ENCODE measurements at regions of chr12 and their contacts with region 1.

Region 1: GRCh38 chr12:6904280-6905278 is at the start of gene LRRC23:
- DNase-seq: peak; percentile 98
- total RNA-seq, gene LRRC23: 13.3 TPM

Region 2: GRCh38 chr12:6662906-6663742 is 241.5 kb before region 1 on chr12 and contains the start of gene ING4:
- intact Hi-C with region 1: no loop called
- DNase-seq: peak; percentile 99
- total RNA-seq, gene ING4: 20.6 TPM

Region 3: DNA sequence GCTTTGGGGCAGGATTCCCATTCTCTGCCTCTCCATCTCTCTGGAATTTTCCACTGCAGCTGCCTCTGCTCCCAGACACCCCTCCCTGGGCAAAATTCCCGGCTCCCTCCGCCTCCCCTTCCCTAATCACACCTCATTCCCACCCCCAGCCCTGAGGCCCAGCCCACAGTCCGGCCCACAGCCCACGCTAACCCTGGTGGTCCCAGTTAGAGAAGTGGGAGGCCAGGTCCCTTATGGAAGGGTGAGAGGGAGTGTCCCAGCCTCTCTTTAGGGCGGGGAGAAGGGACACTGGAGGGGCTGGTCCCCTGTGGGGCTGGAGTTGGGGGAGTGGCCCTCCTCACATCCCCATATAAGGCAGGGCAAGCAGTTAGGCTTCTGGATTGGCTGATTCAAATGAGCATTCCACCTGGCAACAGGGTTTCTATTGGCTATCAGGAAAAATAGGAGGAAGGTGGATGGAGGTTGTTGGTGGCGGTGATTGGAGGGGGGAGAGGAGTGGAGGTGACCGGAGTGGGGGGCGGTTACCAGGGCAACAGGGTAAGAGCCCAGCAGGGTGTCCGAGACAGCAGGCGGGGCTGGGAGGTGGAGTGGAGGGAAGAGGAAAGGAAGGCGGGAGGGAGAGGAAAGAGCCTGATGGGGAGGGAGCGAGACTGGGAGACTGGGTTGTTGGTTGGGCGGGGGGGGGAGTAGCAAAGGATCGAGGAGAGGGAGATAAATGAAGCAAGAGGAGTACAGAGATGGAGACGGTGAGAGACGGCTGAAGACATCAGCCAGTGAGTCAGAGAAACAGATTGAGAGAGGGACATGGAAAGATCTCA is 140.4 kb before region 1 on chr12:
- intact Hi-C with region 1: no loop called
- DNase-seq: peak; percentile 96

Region 4: DNA sequence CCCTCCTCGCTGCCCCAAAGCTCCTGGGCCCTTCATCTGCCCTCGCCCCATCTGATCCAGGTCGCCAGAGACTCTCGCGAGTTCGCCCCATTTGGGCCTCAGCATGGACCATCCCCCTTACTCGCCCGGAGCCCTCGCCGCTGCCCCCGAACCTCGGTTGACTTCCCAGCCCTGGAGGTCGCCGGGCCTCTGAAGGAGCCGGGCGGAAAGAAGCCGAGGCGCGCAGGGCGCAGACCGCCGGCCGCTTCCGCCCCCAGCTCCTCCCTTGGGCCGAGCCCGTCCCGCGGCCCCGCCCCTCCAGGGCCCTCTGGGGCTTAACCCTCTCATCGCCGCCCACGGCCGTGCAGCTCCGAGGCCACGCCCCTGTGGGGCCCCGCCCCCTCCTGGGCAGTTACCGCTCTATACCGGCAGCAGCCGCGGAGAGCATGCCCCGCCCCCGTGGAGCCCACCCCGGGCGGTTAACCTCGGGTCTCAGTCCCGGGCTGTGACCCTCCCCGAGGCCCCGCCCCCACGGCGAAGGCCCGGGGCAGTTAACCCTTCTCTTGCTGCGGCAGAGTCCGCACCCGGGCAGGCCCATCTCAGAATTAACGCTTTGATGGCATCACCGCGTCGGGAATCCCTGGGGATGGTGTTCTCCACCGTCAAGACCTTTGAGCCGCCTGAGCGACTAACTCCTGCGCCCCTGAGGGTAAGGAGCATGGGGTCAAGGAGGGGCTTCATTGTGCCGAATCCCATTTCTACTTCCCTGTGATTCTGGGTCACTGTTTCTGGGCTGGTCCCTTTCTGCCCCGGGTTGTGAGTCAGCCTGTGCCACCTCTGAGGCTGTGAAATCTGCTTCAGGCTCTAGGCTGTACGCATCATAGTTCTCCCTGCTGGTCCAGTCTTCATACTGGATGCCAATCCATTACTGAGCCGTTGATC is 31.2 kb before region 1 on chr12 and contains the start of gene SPSB2:
- intact Hi-C with region 1: loop called (anchors 2 kb)
- DNase-seq: peak; percentile 98
- total RNA-seq, gene SPSB2: 4.5 TPM

Measured in cardiac septum (tissue), 1 donor.